Dorsolateral prefrontal cortex (tissue), 120 donors: ENCODE measurements at regions of chr1 and their contacts with region 1.

Region 1: GRCh38 chr1:1374929-1375662 is at the start of gene AURKAIP1:
- DNase-seq: peak; percentile 95 to 99 (median 99)
- H3K4me3 ChIP-seq: peak within 1 kb of the TSS; percentile 73 to 100 (median 98)
- H3K27ac ChIP-seq: peak within 1 kb of the TSS; percentile 59 to 98 (median 94)
- H3K27me3 ChIP-seq: no peaks in the 10 kb centered on the region
- CTCF ChIP-seq: peak in 55 of 56 donors; percentile 16 to 72 (median 51)
- total RNA-seq, gene AURKAIP1: 78.7 to 143 (median 109) TPM

Region 2: GRCh38 chr1:1115786-1116700 is 259.1 kb before region 1 on chr1 and contains the start of gene C1orf159:
- intact Hi-C with region 1: loop called (anchors 5 kb)
- DNase-seq: peak; percentile 98 to 100 (median 99)
- H3K4me3 ChIP-seq: peak within 1 kb of the TSS; percentile 60 to 98 (median 87)
- H3K27ac ChIP-seq: peak within 1 kb of the TSS in 55 of 59 donors; percentile 27 to 93 (median 81)
- H3K27me3 ChIP-seq: no peaks in the 10 kb centered on the region
- CTCF ChIP-seq: peak in 38 of 56 donors; percentile 8 to 61 (median 34)
- total RNA-seq, gene C1orf159: 14.3 to 35.0 (median 23.4) TPM

Region 3: DNA sequence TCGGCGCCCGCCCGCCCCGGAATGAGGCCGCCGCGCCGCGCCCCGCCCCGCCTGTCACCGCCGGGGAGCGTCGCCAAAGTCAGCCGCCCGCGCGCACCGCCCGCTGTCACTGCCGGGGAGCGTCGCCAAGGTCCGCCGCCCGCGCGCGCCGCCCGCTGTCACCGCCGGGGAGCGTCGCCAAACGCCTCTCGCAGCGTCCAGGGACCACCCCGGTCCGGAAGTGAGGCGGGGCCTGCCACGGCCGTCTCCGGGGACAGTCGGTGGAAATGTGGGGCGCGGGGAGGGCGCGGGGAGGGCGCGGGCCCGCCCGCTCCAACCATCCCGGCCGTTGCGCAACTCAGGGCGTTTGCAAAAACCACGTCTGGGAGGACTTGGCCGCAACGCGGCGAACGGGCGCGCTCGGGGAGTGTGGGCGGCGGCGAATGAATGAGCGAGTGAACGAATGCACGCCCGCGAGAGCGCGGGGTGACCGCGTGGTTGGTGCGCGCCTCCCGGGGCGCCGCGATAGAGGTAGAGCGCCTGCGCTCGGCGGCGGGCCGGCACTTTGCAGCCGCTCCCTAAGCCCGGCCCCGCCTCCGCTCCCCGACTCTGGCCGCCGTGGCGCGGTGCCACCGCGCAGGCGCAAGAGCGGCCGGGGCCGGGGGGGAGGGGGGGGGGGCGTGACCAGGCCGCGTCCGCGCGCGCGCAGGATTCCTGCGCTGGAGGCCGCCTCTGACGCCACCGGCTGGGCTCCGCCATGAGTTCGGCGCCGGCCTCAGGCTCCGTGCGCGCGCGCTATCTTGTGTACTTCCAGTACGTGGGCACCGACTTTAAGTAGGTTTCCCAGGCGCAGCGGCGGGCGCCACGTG is 67.0 kb before region 1 on chr1 and contains the starts of genes ACAP3 and PUSL1:
- intact Hi-C with region 1: loop called in 1 of 2 experiments (anchors 2 kb)
- DNase-seq: peak; percentile 69 to 90 (median 86)
- H3K4me3 ChIP-seq: peak within 1 kb of the TSS; percentile 65 to 97 (median 89)
- H3K27ac ChIP-seq: peak within 1 kb of the TSS; percentile 86 to 100 (median 99)
- H3K27me3 ChIP-seq: no peaks in the 10 kb centered on the region
- CTCF ChIP-seq: peak in 34 of 56 donors; percentile 9 to 55 (median 34)
- total RNA-seq, gene ACAP3: 92.3 to 273 (median 164) TPM
- total RNA-seq, gene PUSL1: 9.1 to 22.8 (median 14.0) TPM

Region 4: GRCh38 chr1:1406817-1407635 is 31.9 kb after region 1 on chr1 and contains the start of gene MRPL20:
- intact Hi-C with region 1: loop called in 1 of 2 experiments (anchors 1 kb)
- DNase-seq: peak; percentile 89 to 96 (median 94)
- H3K4me3 ChIP-seq: peak within 1 kb of the TSS; percentile 50 to 100 (median 95)
- H3K27ac ChIP-seq: peak within 1 kb of the TSS in 58 of 59 donors; percentile 0 to 94 (median 83)
- H3K27me3 ChIP-seq: no peaks in the 10 kb centered on the region
- CTCF ChIP-seq: peak in 36 of 56 donors; percentile 5 to 62 (median 30)
- total RNA-seq, gene MRPL20: 56.0 to 114 (median 86.3) TPM

Region 5: DNA sequence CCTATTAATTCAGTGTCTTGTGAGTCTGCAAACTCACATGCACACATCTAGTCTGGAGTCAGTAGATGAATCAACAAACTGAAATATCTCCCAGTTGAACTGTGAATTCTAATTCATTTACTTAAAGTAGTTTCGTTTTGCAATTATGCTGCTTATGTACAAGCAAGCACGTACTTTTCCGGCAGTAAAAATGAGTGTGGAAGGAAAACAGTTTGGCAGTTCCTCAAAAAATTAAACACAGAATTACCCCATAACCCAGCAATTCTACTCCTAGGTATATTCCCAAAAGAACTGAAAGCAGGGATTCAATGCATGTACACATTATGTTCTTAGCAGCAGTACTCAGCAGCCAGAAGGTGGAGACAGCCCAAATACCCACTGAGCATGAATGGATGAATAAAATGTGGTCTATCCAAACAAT is 466.5 kb after region 1 on chr1:
- intact Hi-C with region 1: no loop called
- DNase-seq: no peak
- H3K4me3 ChIP-seq: peak overlapping the region in 30 of 59 donors; percentile 1 to 43 (median 16)
- H3K27ac ChIP-seq: peak overlapping the region in 58 of 59 donors; percentile 12 to 92 (median 81)
- H3K27me3 ChIP-seq: no peaks in the 10 kb centered on the region
- CTCF ChIP-seq: peak in 14 of 56 donors; percentile 11 to 30 (median 18)